ENCODE measurements at regions of chr10 and their contacts with region 1.

Region 1: DNA sequence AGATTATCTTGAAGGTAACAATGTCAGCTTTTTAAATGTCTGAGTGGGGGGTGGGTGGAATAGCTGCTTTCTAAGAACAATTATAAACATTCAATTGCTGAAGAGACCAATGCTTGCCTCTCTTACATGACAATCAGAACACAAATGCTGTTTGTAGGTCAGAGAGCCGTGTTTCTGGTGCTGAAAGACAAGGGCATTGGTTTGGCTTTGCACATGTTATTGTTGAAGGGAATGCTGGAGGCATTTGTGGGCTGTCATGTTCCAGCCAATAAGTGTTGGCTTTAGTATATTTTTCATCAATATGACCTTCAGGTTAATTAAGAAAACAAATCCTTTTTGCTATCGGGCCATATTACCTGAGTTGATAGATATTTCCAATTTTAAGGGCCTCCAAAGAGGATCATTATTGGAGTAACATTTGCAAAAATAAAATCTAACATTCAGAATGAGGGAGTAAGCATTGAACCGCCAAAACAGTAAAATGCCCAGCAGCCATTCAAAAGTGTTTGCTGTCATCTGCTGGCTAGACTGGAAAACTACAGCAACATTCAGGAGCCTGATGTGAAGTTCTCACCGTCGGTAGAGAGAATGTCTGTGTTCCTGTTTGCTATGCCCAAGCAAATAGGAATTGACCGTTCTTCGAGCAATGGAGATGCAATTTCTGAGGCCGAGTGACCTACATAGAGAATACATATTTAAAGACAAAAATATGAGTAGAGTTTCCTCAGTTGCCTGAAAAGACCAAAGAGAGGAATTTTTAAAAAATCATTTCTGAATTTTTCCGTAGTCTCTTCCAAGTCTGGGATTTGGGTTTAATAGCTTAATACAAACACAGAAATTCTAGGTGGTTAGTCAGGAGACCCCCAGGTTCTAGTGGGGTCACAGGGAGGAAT is 118.9 kb downstream of the APBB1IP start:
- DNase-seq: peak in 1 of 3 donors; percentile 23
- ATAC-seq: peak; percentile 61
- H3K4me3 ChIP-seq: no peak overlapping the region
- H3K4me1 ChIP-seq: no peaks in the 10 kb centered on the region
- CTCF ChIP-seq: peak; percentile 48

Region 2: GRCh38 chr10:25725918-25726716 is 830.9 kb before region 1 on chr10:
- intact Hi-C with region 1: loop called in 1 of 2 experiments (anchors 10 kb)
- DNase-seq: peak in 1 of 3 donors; percentile 64
- ATAC-seq: no peak
- H3K4me3 ChIP-seq: no peak overlapping the region
- H3K4me1 ChIP-seq: no peaks in the 10 kb centered on the region
- CTCF ChIP-seq: peak; percentile 39

Region 3: DNA sequence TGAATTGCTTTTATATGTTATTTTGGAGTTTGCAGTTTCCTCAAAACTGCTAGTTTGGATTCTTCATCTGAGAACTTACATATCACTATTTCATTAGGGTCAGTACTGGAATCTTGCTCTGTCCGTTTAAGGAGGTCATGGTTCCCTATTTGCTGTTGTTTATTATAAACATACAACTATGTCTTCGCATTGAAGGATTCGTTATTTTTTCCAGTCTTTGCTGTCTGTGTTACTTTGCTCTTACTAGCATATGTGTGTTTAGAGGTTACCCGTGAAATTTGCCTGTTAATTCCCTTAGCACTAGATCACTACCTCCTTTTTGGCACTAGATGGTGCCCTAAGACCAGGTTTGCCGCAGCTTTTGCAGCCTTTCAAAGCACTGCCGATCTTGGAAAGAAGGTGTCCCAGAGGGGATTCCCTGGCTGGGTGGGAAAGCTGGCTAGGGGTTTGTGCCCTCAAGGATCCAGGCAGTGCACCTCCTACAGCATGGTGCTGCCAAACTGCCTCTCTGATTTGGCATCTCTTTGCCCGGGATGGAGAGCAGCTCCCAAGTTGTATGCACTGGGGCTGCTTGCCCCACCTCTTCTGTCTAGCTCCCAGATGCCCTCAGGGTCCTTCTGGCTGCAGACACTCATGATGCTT is 221.9 kb before region 1 on chr10:
- intact Hi-C with region 1: loop called in 1 of 2 experiments (anchors 5 kb)
- DNase-seq: peak in 2 of 3 donors; percentile 35 to 50
- ATAC-seq: peak; percentile 71
- H3K4me3 ChIP-seq: no peak overlapping the region
- H3K4me1 ChIP-seq: no peaks in the 10 kb centered on the region
- CTCF ChIP-seq: no peak

Measured in mucosa of descending colon (tissue), 3 donors.